Right lobe of liver (tissue), 6 donors: ENCODE measurements at regions of chr10 and their contacts with region 1.

Region 1: DNA sequence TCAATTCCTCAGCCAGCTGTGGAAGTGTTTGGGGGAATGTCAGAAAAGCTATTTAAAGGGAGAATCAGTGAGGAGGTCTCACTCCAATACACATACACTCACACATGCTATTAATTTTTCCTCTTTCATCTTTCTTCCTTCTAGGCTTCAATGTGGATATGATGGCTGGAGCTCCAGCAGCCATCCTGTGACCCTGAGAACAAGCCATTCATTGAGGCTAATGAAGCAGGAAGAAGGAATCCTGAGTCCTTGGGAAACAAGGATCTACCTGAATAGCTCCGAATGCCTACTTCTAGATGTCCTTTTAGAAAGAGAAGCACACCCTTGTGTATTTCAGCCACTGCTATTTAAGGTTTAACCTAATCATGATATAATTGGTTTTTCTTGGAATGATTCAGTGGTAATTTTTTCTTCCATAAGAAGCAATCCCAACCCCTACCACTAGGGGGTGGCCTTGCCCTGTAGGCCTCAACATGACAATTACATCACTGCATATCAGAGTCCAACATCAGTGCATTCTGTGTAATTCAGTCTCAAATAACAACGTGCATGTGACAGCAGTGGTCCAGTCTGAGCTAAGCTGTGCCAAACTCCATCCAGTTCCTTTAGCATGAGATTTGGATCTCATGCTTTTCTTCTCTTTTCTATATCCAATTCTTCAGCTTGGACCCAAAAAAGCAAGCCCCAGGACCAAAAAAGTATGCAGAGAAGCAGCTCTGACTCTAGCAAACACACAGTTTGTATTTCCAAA is 85.3 kb upstream of the ANKRD1 start:
- DNase-seq: peak in 2 of 3 donors; percentile 23 to 71
- ATAC-seq: peak; percentile 96 to 100 (median 98)
- H3K4me3 ChIP-seq: no peak overlapping the region
- H3K27ac ChIP-seq: no peak overlapping the region
- H3K4me1 ChIP-seq: no peaks in the 10 kb centered on the region
- H3K27me3 ChIP-seq: no peaks in the 10 kb centered on the region
- CTCF ChIP-seq: peak; percentile 96 to 99 (median 98)
- POLR2A ChIP-seq: no peak

Region 2: DNA sequence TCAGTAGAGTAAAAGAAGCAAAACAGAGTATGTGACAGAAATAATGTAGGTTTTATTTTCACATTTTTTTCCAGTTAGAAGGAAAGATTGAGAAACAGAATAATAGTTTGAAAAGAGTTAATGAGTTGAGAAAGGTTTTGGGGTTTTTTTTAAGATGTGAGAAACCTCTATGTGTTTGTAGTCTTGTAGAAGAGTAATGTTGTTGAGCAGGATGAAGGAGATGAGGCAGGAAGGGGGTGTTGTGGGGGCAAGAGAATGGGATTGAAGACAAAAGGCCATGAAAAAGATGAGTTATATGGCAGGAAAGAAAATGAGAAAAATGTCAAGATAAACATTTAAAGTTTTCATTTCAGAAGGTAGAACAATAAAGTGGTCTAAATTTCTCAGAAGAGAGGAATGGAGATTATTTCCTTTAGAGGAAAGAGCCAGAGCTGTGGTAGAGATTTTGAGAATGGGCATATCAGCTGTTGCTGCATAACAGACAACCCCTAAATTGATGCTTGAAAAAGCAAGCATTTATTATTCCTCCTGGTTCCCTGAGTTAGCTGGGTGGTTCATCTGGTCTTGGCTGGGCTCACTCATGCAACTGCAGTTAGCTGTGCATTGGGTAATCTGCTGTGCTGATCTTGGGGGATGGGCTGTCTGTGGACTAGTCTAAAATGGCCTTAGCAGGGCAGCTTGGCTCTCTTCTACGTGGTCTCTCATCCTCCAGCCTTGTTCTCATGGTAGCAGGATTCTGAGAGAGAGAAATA is 241.4 kb after region 1 on chr10:
- intact Hi-C with region 1: loop called in 1 of 2 experiments (anchors 10 kb)
- DNase-seq: peak in 2 of 3 donors; percentile 49 to 51
- ATAC-seq: peak; percentile 69 to 85 (median 71)
- H3K4me3 ChIP-seq: no peak overlapping the region
- H3K27ac ChIP-seq: no peak overlapping the region
- H3K4me1 ChIP-seq: peaks cover 0 to 4% (median 0%) of the 10 kb centered on the region in 4 donors
- H3K27me3 ChIP-seq: no peaks in the 10 kb centered on the region
- CTCF ChIP-seq: no peak
- POLR2A ChIP-seq: no peak